CD4-positive, alpha-beta T cell (primary cell): ENCODE measurements at regions of chr11 and their contacts with region 1.

Region 1: DNA sequence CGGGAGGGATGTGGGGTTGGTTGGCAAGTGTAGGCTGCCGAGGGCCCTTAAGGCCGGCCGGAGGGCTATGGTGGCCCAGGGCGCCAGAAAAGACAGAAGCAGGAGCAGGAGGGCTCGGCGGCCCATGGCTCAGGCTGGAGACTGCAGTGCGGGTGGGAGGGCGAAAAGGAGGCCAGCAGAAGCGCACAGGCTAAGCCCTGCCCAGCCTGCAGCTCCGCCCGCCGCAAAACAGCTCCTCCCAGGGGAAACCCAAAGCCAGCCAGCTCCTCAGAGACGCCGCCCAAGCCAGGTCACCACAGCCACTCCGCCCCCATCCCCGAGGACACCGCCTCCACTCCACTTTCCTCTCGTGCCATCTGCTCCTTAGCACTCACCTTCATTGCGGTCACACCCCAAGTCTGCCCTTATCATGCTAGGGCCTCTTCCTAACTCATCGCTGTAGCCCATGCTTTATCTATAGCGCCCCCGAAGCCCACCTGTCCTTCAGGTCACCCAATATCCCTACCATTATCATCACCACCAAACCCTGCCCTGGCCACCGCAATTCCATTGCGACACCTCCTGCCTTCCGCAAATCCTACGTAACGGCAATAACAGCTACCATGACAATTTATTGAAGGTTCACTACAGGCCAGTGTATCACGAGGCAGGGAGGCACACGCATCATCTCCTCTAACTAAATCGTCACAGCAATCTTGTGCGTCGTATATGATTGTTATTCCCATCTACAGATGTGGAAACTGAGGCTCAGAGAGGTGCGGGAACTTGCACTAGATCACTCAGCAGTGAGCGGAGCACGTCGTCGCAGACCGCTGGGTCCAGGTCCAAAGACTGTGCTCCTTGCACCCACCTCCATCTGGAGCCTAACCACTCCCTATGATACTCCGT is at the start of gene PRCP:
- DNase-seq: peak; percentile 81 to 97 (median 91)
- ATAC-seq: peak; percentile 72
- H3K4me3 ChIP-seq: peak within 1 kb of the TSS; percentile 74
- H3K4me3 Mint-ChIP-seq: peak within 1 kb of the TSS; percentile 99
- H3K27ac ChIP-seq: peak within 1 kb of the TSS; percentile 94 to 98
- H3K27ac Mint-ChIP-seq: peak within 1 kb of the TSS; percentile 97
- H3K4me1 ChIP-seq: peaks cover 35% of the 10 kb centered on the region
- H3K4me1 Mint-ChIP-seq: peaks cover 42% of the 10 kb centered on the region
- H3K27me3 ChIP-seq: no peaks in the 10 kb centered on the region
- H3K27me3 Mint-ChIP-seq: no peaks in the 10 kb centered on the region
- CTCF ChIP-seq: no peak
- total RNA-seq, gene PRCP: 13.7 to 16.0 TPM

Region 2: GRCh38 chr11:82610671-82611070 is 289.9 kb before region 1 on chr11:
- CTCF ChIA-PET with region 1: no interaction called
- POLR2A ChIA-PET with region 1: no interaction called
- intact Hi-C with region 1: no loop called
- DNase-seq: no peak
- ATAC-seq: no peak
- H3K4me3 ChIP-seq: no peak overlapping the region
- H3K4me3 Mint-ChIP-seq: no peak overlapping the region
- H3K27ac ChIP-seq: no peak overlapping the region
- H3K27ac Mint-ChIP-seq: no peak overlapping the region
- H3K4me1 ChIP-seq: no peaks in the 10 kb centered on the region
- H3K4me1 Mint-ChIP-seq: no peaks in the 10 kb centered on the region
- H3K27me3 ChIP-seq: no peaks in the 10 kb centered on the region
- H3K27me3 Mint-ChIP-seq: peaks cover 4% of the 10 kb centered on the region
- CTCF ChIP-seq: no peak

Region 3: DNA sequence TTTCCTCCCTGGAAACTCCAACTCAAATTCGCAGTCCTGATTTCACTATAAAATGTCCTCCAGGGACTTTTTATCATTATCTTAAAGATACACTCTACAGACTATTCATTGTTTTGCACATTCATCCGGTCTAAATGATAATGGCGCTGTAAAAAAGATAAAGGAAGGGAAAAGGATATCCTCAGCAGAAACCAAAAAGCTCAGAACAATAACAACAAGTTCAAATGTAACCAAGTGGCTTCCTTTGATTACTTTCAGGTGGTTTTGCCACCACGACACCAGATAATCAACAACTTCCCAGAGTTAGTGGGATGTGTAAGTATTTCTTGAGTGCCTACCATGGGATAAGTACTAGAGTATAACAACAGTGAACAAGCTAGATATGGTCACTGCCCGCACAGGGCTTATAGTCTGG is 26.6 kb before region 1 on chr11:
- CTCF ChIA-PET with region 1: no interaction called
- POLR2A ChIA-PET with region 1: interaction called, 28 read pairs
- intact Hi-C with region 1: loop called in 1 of 2 experiments (anchors 2 kb)
- DNase-seq: peak in 2 of 14 experiments; percentile 14 to 54
- ATAC-seq: peak; percentile 59
- H3K4me3 ChIP-seq: no peak overlapping the region
- H3K4me3 Mint-ChIP-seq: no peak overlapping the region
- H3K27ac ChIP-seq: no peak overlapping the region
- H3K27ac Mint-ChIP-seq: peak overlapping the region; percentile 65
- H3K4me1 ChIP-seq: peaks cover 5% of the 10 kb centered on the region
- H3K4me1 Mint-ChIP-seq: peaks cover 37% of the 10 kb centered on the region
- H3K27me3 ChIP-seq: no peaks in the 10 kb centered on the region
- H3K27me3 Mint-ChIP-seq: no peaks in the 10 kb centered on the region
- CTCF ChIP-seq: no peak

Region 4: DNA sequence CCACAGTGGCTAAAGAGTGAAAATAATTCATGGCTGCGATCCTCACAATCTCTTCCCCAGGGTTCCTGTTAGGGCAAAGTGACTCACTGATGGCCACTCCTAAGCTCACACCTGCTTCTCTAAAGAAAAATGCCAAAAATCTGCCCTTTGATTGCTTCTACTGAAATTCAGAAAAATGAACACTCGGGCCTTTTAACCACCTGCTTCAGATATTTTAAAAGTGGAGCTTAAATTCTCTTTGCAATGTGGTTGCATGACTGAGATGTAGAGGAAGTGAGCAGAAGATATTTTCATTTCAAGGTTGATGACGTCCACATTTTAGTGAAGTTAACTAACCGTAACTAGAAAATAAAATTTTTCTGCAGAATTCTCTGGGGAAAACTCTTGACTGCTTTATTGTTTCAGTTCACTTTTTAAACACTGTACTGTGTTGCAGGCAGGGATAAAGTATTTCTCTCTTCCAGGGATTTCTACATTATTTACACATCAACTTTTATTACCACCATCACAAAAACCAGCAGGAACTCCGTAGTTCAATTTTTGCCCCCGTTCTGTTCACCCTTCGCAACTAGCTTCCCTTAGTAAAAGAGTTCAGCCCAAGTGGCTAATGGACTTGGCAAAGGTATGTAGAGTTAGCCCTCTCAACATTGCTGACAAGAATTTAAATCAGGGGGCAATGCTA is 162.7 kb after region 1 on chr11:
- CTCF ChIA-PET with region 1: no interaction called
- POLR2A ChIA-PET with region 1: interaction called, 10 read pairs
- intact Hi-C with region 1: no loop called
- DNase-seq: peak in 3 of 14 experiments; percentile 46 to 62 (median 53)
- ATAC-seq: peak; percentile 87
- H3K4me3 ChIP-seq: peak overlapping the region; percentile 39
- H3K4me3 Mint-ChIP-seq: peak overlapping the region; percentile 87
- H3K27ac ChIP-seq: peak overlapping the region; percentile 6 to 36
- H3K27ac Mint-ChIP-seq: peak overlapping the region; percentile 78
- H3K4me1 ChIP-seq: peaks cover 13% of the 10 kb centered on the region
- H3K4me1 Mint-ChIP-seq: peaks cover 39% of the 10 kb centered on the region
- H3K27me3 ChIP-seq: no peaks in the 10 kb centered on the region
- H3K27me3 Mint-ChIP-seq: no peaks in the 10 kb centered on the region
- CTCF ChIP-seq: no peak

Region 5: GRCh38 chr11:83249972-83250593 is 349.6 kb after region 1 on chr11:
- CTCF ChIA-PET with region 1: interaction called, 9 read pairs
- POLR2A ChIA-PET with region 1: interaction called, 11 read pairs
- intact Hi-C with region 1: no loop called
- DNase-seq: peak in 4 of 14 experiments; percentile 21 to 70 (median 62)
- ATAC-seq: peak; percentile 85
- H3K4me3 ChIP-seq: no peak overlapping the region
- H3K4me3 Mint-ChIP-seq: no peak overlapping the region
- H3K27ac ChIP-seq: no peak overlapping the region
- H3K27ac Mint-ChIP-seq: no peak overlapping the region
- H3K4me1 ChIP-seq: no peaks in the 10 kb centered on the region
- H3K4me1 Mint-ChIP-seq: no peaks in the 10 kb centered on the region
- H3K27me3 ChIP-seq: no peaks in the 10 kb centered on the region
- H3K27me3 Mint-ChIP-seq: no peaks in the 10 kb centered on the region
- CTCF ChIP-seq: peak; percentile 85